ENCODE measurements at regions of chr16 and their contacts with region 1.

Region 1: DNA sequence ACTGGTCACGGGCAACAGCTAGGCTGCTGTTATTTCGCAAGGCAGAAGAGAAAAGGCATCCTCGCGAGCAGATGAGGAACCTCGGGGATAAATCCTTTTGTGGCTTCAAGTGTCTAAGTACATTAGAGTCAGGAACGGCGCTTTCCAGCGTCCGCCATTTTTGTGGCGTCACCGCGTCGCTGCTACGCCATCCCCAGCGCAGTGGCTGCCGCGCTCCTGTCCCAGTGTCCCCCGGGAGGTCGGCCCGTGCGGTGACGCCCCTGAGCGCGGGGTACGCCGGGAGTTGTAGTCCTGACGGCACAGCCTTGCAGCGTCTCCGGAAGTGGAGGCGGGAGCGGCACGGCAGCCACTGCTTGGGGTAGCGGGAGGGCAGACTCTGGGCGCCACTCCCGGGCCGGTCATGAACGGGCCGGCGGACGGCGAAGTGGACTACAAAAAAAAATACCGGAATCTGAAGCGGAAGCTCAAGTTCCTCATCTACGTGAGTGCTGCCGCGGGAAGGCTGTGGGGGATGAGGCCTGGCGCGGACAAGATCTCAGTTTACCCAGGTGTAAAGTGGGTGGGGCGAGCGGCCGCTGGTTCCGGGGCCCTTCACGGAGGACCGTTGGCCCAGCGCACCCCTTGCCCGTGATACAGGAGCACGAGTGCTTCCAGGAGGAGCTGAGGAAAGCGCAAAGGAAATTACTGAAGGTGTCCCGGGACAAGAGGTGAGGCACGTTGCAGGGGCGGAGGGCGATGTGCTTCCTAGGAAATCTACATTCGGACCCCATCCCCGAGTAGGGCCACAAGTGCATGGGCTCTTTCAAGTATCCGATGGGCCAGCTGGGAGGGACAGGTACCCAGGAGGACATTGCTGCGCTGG is at the start of gene INO80E:
- DNase-seq: peak; percentile 96 to 99 (median 99)
- ATAC-seq: peak; percentile 95 to 97
- H3K4me3 Mint-ChIP-seq: peak within 1 kb of the TSS; percentile 96 to 100 (median 97)
- H3K27ac Mint-ChIP-seq: peak within 1 kb of the TSS; percentile 91 to 99 (median 98)
- H3K4me1 Mint-ChIP-seq: peaks cover 30 to 48% (median 39%) of the 10 kb centered on the region in 4 donors
- H3K27me3 Mint-ChIP-seq: no peaks in the 10 kb centered on the region
- polyA plus RNA-seq, gene INO80E: 6.5 to 8.9 (median 7.6) TPM

Region 2: GRCh38 chr16:29926005-29926710 is 70.0 kb before region 1 on chr16 and contains the start of gene KCTD13:
- POLR2A ChIA-PET with region 1: interaction called, 39 read pairs
- DNase-seq: peak; percentile 79 to 97 (median 91)
- ATAC-seq: peak; percentile 88 to 93
- H3K4me3 Mint-ChIP-seq: peak within 1 kb of the TSS; percentile 90 to 97 (median 94)
- H3K27ac Mint-ChIP-seq: peak within 1 kb of the TSS; percentile 90 to 98 (median 97)
- H3K4me1 Mint-ChIP-seq: peaks cover 13 to 44% (median 38%) of the 10 kb centered on the region in 4 donors
- H3K27me3 Mint-ChIP-seq: no peaks in the 10 kb centered on the region
- polyA plus RNA-seq, gene KCTD13: 5.4 to 10.0 (median 8.4) TPM

Region 3: GRCh38 chr16:29961479-29962343 is 34.4 kb before region 1 on chr16 and contains the start of gene TMEM219:
- POLR2A ChIA-PET with region 1: interaction called, 15 read pairs
- DNase-seq: peak; percentile 90 to 98 (median 96)
- ATAC-seq: peak; percentile 84 to 91
- H3K4me3 Mint-ChIP-seq: peak within 1 kb of the TSS; percentile 86 to 94 (median 89)
- H3K27ac Mint-ChIP-seq: peak within 1 kb of the TSS; percentile 77 to 97 (median 93)
- H3K4me1 Mint-ChIP-seq: peaks cover 12 to 29% (median 27%) of the 10 kb centered on the region in 4 donors
- H3K27me3 Mint-ChIP-seq: no peaks in the 10 kb centered on the region
- polyA plus RNA-seq, gene TMEM219: 157 to 179 (median 174) TPM

Region 4: GRCh38 chr16:29973384-29974246 is 22.5 kb before region 1 on chr16 and contains the start of gene TAOK2:
- POLR2A ChIA-PET with region 1: interaction called, 13 read pairs
- DNase-seq: peak; percentile 82 to 97 (median 92)
- ATAC-seq: peak; percentile 88 to 96
- H3K4me3 Mint-ChIP-seq: peak within 1 kb of the TSS; percentile 82 to 98 (median 95)
- H3K27ac Mint-ChIP-seq: peak within 1 kb of the TSS; percentile 66 to 96 (median 91)
- H3K4me1 Mint-ChIP-seq: peaks cover 19 to 43% (median 40%) of the 10 kb centered on the region in 4 donors
- H3K27me3 Mint-ChIP-seq: no peaks in the 10 kb centered on the region
- polyA plus RNA-seq, gene TAOK2: 2.6 to 6.6 (median 2.8) TPM

Region 5: DNA sequence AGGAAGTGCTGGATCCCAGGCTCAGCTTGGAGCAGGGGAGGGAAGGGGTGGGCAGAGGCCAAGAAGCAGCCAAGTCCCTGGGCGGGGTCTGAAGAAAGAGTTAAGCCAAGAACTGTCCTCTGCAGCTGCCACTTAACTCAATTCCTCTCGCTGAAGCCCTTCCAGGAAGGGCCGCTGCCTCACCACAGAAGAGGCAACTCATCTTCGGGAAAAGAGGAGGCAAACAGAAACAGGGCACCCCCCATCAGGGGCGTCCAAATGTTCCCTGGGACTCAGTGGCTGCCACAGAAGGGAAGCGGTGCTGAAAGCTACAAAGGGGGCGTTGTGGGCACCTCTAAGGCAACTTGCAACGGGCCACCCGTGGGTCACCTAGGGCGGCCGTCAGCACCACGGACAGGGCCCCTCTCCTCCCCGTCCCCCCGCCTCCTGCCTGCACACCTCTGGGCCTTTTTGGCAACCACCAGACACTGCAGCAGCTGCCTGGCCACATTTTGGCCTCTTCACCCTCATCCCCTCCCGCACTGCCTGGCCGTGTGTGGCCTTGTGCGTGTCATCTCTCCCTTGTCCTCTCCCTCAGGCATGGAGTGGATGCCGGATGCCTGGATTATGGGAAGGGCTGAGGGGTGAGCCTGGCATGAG is 32.4 kb after region 1 on chr16:
- POLR2A ChIA-PET with region 1: no interaction called
- DNase-seq: no peak
- ATAC-seq: peak; percentile 31 to 32
- H3K4me3 Mint-ChIP-seq: no peak overlapping the region
- H3K27ac Mint-ChIP-seq: no peak overlapping the region
- H3K4me1 Mint-ChIP-seq: peaks cover 10 to 24% (median 13%) of the 10 kb centered on the region in 4 donors
- H3K27me3 Mint-ChIP-seq: peaks cover 21 to 57% (median 36%) of the 10 kb centered on the region in 5 donors

Region 6: DNA sequence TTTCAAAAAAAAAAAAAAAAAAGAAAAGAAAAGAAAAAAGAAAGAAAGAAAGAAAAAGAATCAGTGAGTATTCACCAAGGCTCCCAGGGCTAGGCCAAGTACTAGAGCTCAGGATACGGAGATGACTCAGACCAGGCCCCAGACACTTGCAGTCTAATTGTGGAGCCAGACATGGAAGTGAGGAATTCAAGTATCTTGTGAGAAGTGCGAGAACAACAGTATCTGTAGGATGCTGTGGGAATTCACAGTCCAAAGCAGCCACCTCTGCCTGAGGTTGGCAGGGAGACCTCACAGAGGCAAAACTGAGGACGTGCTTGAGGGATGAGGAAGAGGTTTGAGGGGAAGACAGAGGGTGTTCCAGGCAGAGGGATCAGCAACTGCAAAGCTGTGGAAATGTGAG is 55.4 kb after region 1 on chr16:
- POLR2A ChIA-PET with region 1: no interaction called
- DNase-seq: no peak
- ATAC-seq: no peak
- H3K4me3 Mint-ChIP-seq: peak overlapping the region in 8 of 10 donors; percentile 48 to 76 (median 68)
- H3K27ac Mint-ChIP-seq: peak overlapping the region in 4 of 10 donors; percentile 42 to 77 (median 52)
- H3K4me1 Mint-ChIP-seq: peaks cover 9 to 21% (median 19%) of the 10 kb centered on the region in 4 donors
- H3K27me3 Mint-ChIP-seq: peaks cover 0 to 3% (median 0%) of the 10 kb centered on the region in 5 donors

Region 7: GRCh38 chr16:30065143-30065850 is 69.2 kb after region 1 on chr16 and contains the start of gene ALDOA:
- POLR2A ChIA-PET with region 1: interaction called, 11 read pairs
- DNase-seq: peak; percentile 89 to 96 (median 92)
- ATAC-seq: peak; percentile 81 to 87
- H3K4me3 Mint-ChIP-seq: peak within 1 kb of the TSS; percentile 98 to 100 (median 99)
- H3K27ac Mint-ChIP-seq: peak within 1 kb of the TSS; percentile 94 to 99 (median 97)
- H3K4me1 Mint-ChIP-seq: peaks cover 17 to 46% (median 43%) of the 10 kb centered on the region in 4 donors
- H3K27me3 Mint-ChIP-seq: no peaks in the 10 kb centered on the region
- polyA plus RNA-seq, gene ALDOA: 798 to 1,176 (median 994) TPM

Region 8: GRCh38 chr16:30082545-30083090 is 86.5 kb after region 1 on chr16:
- POLR2A ChIA-PET with region 1: no interaction called
- DNase-seq: no peak
- ATAC-seq: no peak
- H3K4me3 Mint-ChIP-seq: no peak overlapping the region
- H3K27ac Mint-ChIP-seq: peak overlapping the region in 5 of 10 donors; percentile 22 to 85 (median 61)
- H3K4me1 Mint-ChIP-seq: peaks cover 14 to 28% (median 16%) of the 10 kb centered on the region in 4 donors
- H3K27me3 Mint-ChIP-seq: no peaks in the 10 kb centered on the region